Breast epithelium (tissue), 4 donors: ENCODE measurements at regions of chr1 and their contacts with region 1.

Region 1: GRCh38 chr1:173714759-173715537 is at the start of gene KLHL20:
- DNase-seq: peak; percentile 69 to 73
- H3K4me3 ChIP-seq: peak within 1 kb of the TSS; percentile 58 to 79 (median 75)
- H3K27ac ChIP-seq: peak within 1 kb of the TSS; percentile 84 to 92
- H3K4me1 ChIP-seq: peaks cover 0 to 8% of the 10 kb centered on the region in 2 donors
- H3K27me3 ChIP-seq: no peaks in the 10 kb centered on the region
- CTCF ChIP-seq: no peak
- POLR2A ChIP-seq: no peak
- total RNA-seq, gene KLHL20: 29.8 to 45.0 (median 41.4) TPM

Region 2: GRCh38 chr1:173693238-173693637 is 21.7 kb before region 1 on chr1:
- intact Hi-C with region 1: no loop called
- DNase-seq: no peak
- H3K4me3 ChIP-seq: no peak overlapping the region
- H3K27ac ChIP-seq: no peak overlapping the region
- H3K4me1 ChIP-seq: no peaks in the 10 kb centered on the region
- H3K27me3 ChIP-seq: no peaks in the 10 kb centered on the region
- CTCF ChIP-seq: no peak
- POLR2A ChIP-seq: no peak

Region 3: DNA sequence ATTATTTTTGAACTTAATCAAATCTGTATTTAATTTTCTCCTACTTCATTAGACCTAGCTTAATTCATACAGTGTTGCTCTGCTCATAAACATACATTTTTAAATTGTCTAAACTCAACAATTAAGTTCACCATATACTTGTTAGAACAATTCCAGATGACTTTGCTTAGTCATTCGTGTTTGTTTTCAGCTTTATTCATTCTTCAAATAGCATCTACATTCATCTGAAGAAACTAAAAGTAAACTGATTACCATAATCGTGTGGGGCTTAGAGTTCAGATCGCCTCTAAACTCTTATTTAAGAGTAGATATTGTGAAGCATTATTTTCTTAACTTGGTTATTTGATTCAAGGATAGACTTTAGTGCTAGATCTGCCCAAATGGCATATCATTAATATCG is 34.2 kb after region 1 on chr1:
- intact Hi-C with region 1: no loop called
- DNase-seq: no peak
- H3K4me3 ChIP-seq: no peak overlapping the region
- H3K27ac ChIP-seq: no peak overlapping the region
- H3K4me1 ChIP-seq: no peaks in the 10 kb centered on the region
- H3K27me3 ChIP-seq: no peaks in the 10 kb centered on the region
- CTCF ChIP-seq: no peak
- POLR2A ChIP-seq: no peak

Region 4: GRCh38 chr1:174040387-174040786 is 325.4 kb after region 1 on chr1:
- intact Hi-C with region 1: no loop called
- DNase-seq: no peak
- H3K4me3 ChIP-seq: no peak overlapping the region
- H3K27ac ChIP-seq: no peak overlapping the region
- H3K4me1 ChIP-seq: no peaks in the 10 kb centered on the region
- H3K27me3 ChIP-seq: no peaks in the 10 kb centered on the region
- CTCF ChIP-seq: no peak
- POLR2A ChIP-seq: no peak

Region 5: DNA sequence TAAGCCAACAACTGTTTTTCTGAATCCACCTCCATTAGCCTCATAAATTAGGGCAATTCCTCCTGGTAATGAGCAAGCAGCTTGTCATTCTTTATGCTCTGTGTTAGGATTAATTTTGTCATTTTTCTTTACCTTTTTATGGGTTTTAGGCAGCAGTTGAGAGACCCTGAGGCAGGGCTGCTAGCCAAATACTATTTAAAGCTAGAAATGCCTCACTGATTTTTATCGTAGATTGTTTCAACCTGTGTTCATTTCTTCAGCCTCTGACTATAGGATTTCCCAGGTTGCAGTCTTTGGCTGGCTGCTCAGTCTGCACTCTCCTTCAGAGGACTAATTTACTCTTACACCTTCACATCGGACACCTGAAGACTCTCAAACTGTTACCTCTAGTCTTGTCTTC is 382.5 kb after region 1 on chr1:
- intact Hi-C with region 1: no loop called
- DNase-seq: no peak
- H3K4me3 ChIP-seq: no peak overlapping the region
- H3K27ac ChIP-seq: no peak overlapping the region
- H3K4me1 ChIP-seq: no peaks in the 10 kb centered on the region
- H3K27me3 ChIP-seq: no peaks in the 10 kb centered on the region
- CTCF ChIP-seq: no peak
- POLR2A ChIP-seq: no peak

Region 6: GRCh38 chr1:174892016-174892415 is 1177.1 kb after region 1 on chr1:
- intact Hi-C with region 1: loop called (anchors 5 kb)
- DNase-seq: no peak
- H3K4me3 ChIP-seq: no peak overlapping the region
- H3K27ac ChIP-seq: no peak overlapping the region
- H3K4me1 ChIP-seq: no peaks in the 10 kb centered on the region
- H3K27me3 ChIP-seq: no peaks in the 10 kb centered on the region
- CTCF ChIP-seq: no peak
- POLR2A ChIP-seq: no peak